Heart left ventricle (tissue), 16 donors: ENCODE measurements at regions of chr11 and their contacts with region 1.

Region 1: DNA sequence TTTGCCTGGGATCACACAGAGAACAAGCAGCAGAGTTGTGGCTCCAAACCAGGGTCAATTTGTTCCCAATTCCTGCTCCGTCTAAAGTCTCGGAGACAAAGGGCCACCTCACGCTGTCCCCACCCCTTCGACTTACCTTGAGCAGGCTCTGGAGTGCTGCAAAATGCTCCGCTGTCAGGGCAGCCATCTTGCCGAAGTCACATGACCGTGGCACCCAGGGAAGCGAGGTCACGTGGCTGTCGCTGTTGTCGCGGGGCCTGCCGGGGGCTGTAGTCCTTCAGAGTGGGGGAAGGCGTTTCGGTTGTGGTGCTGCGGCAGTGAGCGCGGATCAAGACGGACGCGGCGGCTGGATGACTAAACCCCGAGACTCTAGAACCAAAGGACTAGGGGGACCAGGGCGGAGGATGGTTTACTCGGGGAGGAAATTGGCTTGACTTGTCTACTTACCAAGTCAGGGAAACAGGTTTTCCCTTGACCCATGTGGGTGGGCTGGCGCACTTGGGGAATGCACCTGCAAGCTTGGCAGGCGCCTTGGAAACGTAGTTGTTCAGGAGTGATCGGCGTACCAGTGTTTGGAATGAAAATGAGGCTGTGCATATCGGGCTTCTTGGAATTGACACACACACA is at the start of gene COMMD9:
- DNase-seq: peak; percentile 94 to 97 (median 95)
- ATAC-seq: peak; percentile 98 to 100 (median 100)
- H3K4me3 ChIP-seq: peak within 1 kb of the TSS; percentile 51 to 87 (median 72)
- H3K27ac ChIP-seq: peak within 1 kb of the TSS in 8 of 12 donors; percentile 24 to 81 (median 37)
- H3K4me1 ChIP-seq: peaks cover 0 to 22% (median 10%) of the 10 kb centered on the region in 12 donors
- H3K27me3 ChIP-seq: no peaks in the 10 kb centered on the region
- CTCF ChIP-seq: no peak
- POLR2A ChIP-seq: no peak
- total RNA-seq, gene COMMD9: 39.0 to 92.4 (median 59.4) TPM

Region 2: DNA sequence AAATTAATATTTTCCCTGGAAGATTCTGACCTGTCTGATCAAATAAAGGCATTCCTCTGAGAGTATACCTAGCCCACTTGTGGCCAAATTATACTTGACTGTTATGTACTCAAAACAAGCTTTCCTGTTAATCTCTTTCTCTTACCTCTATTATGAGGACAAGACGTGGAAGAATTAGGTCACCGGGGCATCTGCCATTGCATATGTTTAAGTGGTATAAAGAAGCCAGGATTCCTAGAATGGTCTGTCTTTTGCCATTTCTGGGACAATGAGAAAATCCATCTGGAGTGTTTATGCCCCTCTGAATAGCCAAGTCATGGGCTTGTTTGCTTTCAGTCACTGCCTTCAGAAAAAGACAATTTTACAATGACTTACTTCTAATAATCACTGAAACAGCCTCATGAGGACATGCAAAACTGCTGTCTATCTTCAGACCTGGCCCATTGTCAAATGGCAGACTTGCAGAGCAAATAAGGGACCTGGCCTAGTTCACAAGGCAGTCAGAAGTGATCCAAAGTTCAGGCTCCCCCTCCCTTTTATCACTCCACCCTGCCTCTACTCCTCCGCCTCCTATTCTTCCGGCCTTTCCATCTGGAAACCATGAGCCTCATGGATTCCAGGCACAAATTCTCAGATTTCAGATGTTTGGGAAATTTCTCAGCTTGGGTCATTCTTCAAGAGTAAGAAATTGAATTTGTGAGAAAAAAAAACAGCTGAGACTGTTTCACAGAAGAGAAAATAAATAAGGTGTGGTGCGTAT is 473.6 kb before region 1 on chr11:
- intact Hi-C with region 1: loop called in 1 of 10 experiments (anchors 10 kb)
- DNase-seq: peak in 4 of 5 donors; percentile 59 to 65 (median 59)
- ATAC-seq: peak in 3 of 4 donors; percentile 69 to 74 (median 71)
- H3K4me3 ChIP-seq: no peak overlapping the region
- H3K27ac ChIP-seq: peak overlapping the region in 3 of 12 donors; percentile 3 to 61 (median 24)
- H3K4me1 ChIP-seq: peaks cover 0 to 50% (median 32%) of the 10 kb centered on the region in 12 donors
- H3K27me3 ChIP-seq: no peaks in the 10 kb centered on the region
- CTCF ChIP-seq: no peak
- POLR2A ChIP-seq: no peak

Region 3: GRCh38 chr11:36478700-36479329 is 189.5 kb after region 1 on chr11:
- intact Hi-C with region 1: loop called (anchors 2 to 5 kb)
- DNase-seq: peak in 1 of 5 donors; percentile 30
- ATAC-seq: peak in 3 of 4 donors; percentile 70 to 80 (median 78)
- H3K4me3 ChIP-seq: no peak overlapping the region
- H3K27ac ChIP-seq: no peak overlapping the region
- H3K4me1 ChIP-seq: peaks cover 0 to 17% (median 5%) of the 10 kb centered on the region in 12 donors
- H3K27me3 ChIP-seq: no peaks in the 10 kb centered on the region
- CTCF ChIP-seq: peak; percentile 25 to 77 (median 62)
- POLR2A ChIP-seq: no peak

Region 4: DNA sequence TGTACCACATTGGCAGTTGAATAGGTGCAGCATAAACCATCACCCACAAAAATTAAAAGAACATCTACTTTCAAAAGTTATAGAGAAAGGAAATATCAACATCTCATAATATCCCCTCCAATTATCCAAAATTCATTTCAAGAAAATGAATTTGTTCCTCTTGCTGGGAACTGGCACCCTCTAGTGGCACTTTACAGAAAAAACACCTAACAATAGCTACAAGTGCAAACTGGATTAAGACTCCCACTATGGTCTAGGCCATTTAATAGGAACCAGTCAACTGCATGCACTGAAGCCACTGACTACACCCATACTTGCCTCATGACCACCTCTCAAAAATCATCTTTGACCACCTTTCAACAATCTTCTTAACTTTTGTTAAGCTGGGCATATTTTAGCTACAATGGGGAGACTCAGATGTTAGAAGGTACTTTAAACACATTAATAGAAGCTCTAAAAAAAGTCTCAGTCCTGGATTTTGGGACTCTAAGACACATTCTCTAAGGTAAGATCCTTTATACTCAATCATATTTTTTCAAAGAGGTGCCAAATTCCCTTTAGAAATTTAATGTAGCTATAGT is 203.5 kb after region 1 on chr11:
- intact Hi-C with region 1: loop called in 6 of 10 experiments (anchors 5 kb)
- DNase-seq: no peak
- ATAC-seq: peak in 3 of 4 donors; percentile 50 to 55 (median 51)
- H3K4me3 ChIP-seq: no peak overlapping the region
- H3K27ac ChIP-seq: no peak overlapping the region
- H3K4me1 ChIP-seq: peaks cover 0 to 13% (median 5%) of the 10 kb centered on the region in 12 donors
- H3K27me3 ChIP-seq: no peaks in the 10 kb centered on the region
- CTCF ChIP-seq: peak; percentile 70 to 89 (median 79)
- POLR2A ChIP-seq: no peak